ENCODE measurements at regions of chr12 and their contacts with region 1.

Region 1: GRCh38 chr12:42129595-42130204 is 15.0 kb downstream of the GXYLT1 start:
- DNase-seq: peak in 1 of 5 donors; percentile 17
- ATAC-seq: peak; percentile 54 to 84 (median 74)
- H3K4me3 ChIP-seq: no peak overlapping the region
- H3K27ac ChIP-seq: no peak overlapping the region
- H3K4me1 ChIP-seq: peaks cover 0 to 34% (median 13%) of the 10 kb centered on the region in 12 donors
- H3K27me3 ChIP-seq: no peaks in the 10 kb centered on the region
- CTCF ChIP-seq: peak; percentile 66 to 91 (median 86)
- POLR2A ChIP-seq: no peak

Region 2: GRCh38 chr12:42325653-42326474 is 196.2 kb after region 1 on chr12 and contains the starts of genes PPHLN1 and ZCRB1:
- intact Hi-C with region 1: loop called in 6 of 10 experiments (anchors 2 to 5 kb)
- DNase-seq: peak; percentile 83 to 89 (median 88)
- ATAC-seq: peak; percentile 94 to 98 (median 98)
- H3K4me3 ChIP-seq: peak within 1 kb of the TSS; percentile 47 to 96 (median 76)
- H3K27ac ChIP-seq: peak within 1 kb of the TSS; percentile 43 to 90 (median 82)
- H3K4me1 ChIP-seq: peaks cover 4 to 38% (median 25%) of the 10 kb centered on the region in 12 donors
- H3K27me3 ChIP-seq: no peaks in the 10 kb centered on the region
- CTCF ChIP-seq: no peak
- POLR2A ChIP-seq: peak in 1 of 2 donors; percentile 60
- total RNA-seq, gene PPHLN1: 25.5 to 41.1 (median 35.6) TPM
- total RNA-seq, gene ZCRB1: 30.8 to 69.0 (median 56.2) TPM

Region 3: DNA sequence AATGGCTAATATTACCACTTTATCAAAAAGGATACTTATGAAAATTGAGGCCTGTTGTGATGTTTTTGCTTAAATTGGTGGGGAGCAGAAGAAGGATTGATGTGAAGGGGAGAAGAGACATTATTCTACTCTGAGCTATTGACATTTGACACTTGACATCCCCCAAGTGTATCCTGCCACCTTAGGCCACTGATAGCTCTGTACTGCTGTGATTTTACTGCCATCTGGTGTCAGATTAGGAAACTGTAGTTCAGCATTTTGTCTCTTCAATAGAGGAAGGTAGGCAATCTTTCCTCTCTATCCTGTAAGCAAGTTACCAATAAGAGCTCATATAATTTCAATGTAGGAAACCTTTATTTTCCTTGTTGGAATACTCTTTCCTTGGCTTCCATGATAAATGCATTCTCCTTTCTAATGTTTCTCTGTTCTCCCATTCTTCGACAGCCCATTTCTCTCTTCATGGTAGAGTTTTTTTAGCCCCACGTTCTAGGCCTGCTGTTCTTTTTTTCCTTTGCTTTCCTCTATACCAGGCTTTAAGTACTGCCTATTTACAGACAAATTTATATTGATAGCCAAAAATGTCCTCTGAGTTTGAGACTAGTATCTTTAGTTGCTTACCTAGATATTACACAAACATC is 242.6 kb after region 1 on chr12:
- intact Hi-C with region 1: loop called in 4 of 10 experiments (anchors 1 to 10 kb)
- DNase-seq: peak in 1 of 5 donors; percentile 15
- ATAC-seq: peak in 3 of 4 donors; percentile 67 to 78 (median 71)
- H3K4me3 ChIP-seq: no peak overlapping the region
- H3K27ac ChIP-seq: no peak overlapping the region
- H3K4me1 ChIP-seq: no peaks in the 10 kb centered on the region
- H3K27me3 ChIP-seq: no peaks in the 10 kb centered on the region
- CTCF ChIP-seq: peak; percentile 60 to 81 (median 70)
- POLR2A ChIP-seq: no peak

Region 4: GRCh38 chr12:42574851-42575266 is 445.2 kb after region 1 on chr12:
- intact Hi-C with region 1: loop called in 2 of 10 experiments (anchors 10 kb)
- DNase-seq: no peak
- ATAC-seq: no peak
- H3K4me3 ChIP-seq: no peak overlapping the region
- H3K27ac ChIP-seq: peak overlapping the region in 1 of 12 donors; percentile 22
- H3K4me1 ChIP-seq: peaks cover 0 to 57% (median 29%) of the 10 kb centered on the region in 12 donors
- H3K27me3 ChIP-seq: no peaks in the 10 kb centered on the region
- CTCF ChIP-seq: no peak
- POLR2A ChIP-seq: no peak

Region 5: GRCh38 chr12:43338848-43339526 is 1209.3 kb after region 1 on chr12:
- intact Hi-C with region 1: loop called in 4 of 10 experiments (anchors 10 kb)
- DNase-seq: peak in 1 of 5 donors; percentile 22
- ATAC-seq: peak; percentile 74 to 99 (median 98)
- H3K4me3 ChIP-seq: no peak overlapping the region
- H3K27ac ChIP-seq: peak overlapping the region in 9 of 12 donors; percentile 12 to 58 (median 47)
- H3K4me1 ChIP-seq: peaks cover 0 to 16% (median 8%) of the 10 kb centered on the region in 12 donors
- H3K27me3 ChIP-seq: no peaks in the 10 kb centered on the region
- CTCF ChIP-seq: peak in 11 of 12 donors; percentile 47 to 83 (median 70)
- POLR2A ChIP-seq: no peak

Measured in heart left ventricle (tissue), 16 donors.